AG04449 (cell line): ENCODE measurements at regions of chr14 and their contacts with region 1.

Region 1: GRCh38 chr14:75906676-75907280 is 75.0 kb downstream of the TGFB3 start:
- DNase-seq: no peak
- H3K4me3 ChIP-seq: no peak overlapping the region
- CTCF ChIP-seq: peak; percentile 68

Region 2: DNA sequence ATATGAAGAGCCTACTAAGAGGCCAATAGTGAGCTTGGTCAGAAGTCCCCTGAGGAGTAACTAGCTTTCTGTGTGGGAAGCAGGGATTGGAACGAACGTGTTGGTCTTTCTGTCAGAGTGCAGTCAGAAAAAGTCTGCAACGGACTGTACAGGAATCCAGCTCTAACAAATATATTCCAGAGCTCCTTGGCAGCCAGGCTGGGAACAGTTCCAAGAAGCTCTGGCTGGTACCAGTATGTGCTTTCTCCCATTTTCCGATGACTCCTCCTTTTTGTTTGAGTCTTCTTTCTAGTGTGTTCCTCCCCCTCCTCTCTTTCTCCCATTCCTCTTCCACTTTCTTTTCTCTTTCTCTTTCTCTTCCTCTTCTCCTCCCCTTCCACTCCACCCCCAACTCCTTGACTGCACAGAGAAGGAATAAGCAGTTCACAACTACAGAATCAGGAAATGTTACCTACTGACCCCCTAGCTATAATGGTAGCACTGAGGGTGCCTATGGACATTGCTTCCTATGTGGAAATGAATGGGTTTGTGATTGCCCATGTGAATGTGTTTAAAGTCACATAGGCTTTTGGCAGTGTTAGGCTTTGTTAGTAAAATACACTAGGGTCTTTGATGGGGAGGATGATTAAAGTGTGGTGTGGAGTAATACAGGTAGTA is 185.8 kb before region 1 on chr14:
- CTCF ChIA-PET with region 1: interaction called, 16 read pairs
- POLR2A ChIA-PET with region 1: no interaction called
- DNase-seq: no peak
- H3K4me3 ChIP-seq: no peak overlapping the region
- CTCF ChIP-seq: no peak

Region 3: GRCh38 chr14:75822522-75823141 is 84.1 kb before region 1 on chr14:
- CTCF ChIA-PET with region 1: interaction called, 17 read pairs
- POLR2A ChIA-PET with region 1: no interaction called
- DNase-seq: no peak
- H3K4me3 ChIP-seq: no peak overlapping the region
- CTCF ChIP-seq: no peak

Region 4: GRCh38 chr14:75884198-75884611 is 22.6 kb before region 1 on chr14:
- CTCF ChIA-PET with region 1: interaction called, 163 read pairs
- POLR2A ChIA-PET with region 1: no interaction called
- DNase-seq: peak; percentile 78
- H3K4me3 ChIP-seq: no peak overlapping the region
- CTCF ChIP-seq: no peak

Region 5: GRCh38 chr14:75928690-75929181 is 22.0 kb after region 1 on chr14:
- CTCF ChIA-PET with region 1: interaction called, 45 read pairs
- POLR2A ChIA-PET with region 1: no interaction called
- DNase-seq: no peak
- H3K4me3 ChIP-seq: no peak overlapping the region
- CTCF ChIP-seq: no peak

Region 6: DNA sequence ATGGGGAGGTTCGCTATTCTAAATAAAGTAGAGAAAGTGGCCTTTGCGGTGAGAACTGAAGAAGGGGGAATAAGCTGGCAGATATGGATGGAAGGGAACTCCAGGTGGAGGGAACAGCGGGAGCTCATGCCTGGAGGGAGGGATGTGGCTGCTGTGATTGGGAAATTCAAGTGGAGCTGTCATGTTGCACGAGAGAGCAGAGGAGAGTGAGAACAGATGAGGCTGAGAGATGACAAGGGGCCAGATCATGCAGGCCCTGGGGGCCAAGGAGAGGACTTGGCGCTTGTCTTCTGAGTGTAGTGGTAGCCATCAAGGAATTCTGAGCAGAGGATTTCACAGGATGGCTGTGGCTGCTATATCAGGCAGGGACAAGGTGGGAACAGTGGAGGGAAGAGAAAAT is 40.0 kb after region 1 on chr14:
- CTCF ChIA-PET with region 1: interaction called, 32 read pairs
- POLR2A ChIA-PET with region 1: no interaction called
- DNase-seq: no peak
- H3K4me3 ChIP-seq: no peak overlapping the region
- CTCF ChIP-seq: no peak

Region 7: DNA sequence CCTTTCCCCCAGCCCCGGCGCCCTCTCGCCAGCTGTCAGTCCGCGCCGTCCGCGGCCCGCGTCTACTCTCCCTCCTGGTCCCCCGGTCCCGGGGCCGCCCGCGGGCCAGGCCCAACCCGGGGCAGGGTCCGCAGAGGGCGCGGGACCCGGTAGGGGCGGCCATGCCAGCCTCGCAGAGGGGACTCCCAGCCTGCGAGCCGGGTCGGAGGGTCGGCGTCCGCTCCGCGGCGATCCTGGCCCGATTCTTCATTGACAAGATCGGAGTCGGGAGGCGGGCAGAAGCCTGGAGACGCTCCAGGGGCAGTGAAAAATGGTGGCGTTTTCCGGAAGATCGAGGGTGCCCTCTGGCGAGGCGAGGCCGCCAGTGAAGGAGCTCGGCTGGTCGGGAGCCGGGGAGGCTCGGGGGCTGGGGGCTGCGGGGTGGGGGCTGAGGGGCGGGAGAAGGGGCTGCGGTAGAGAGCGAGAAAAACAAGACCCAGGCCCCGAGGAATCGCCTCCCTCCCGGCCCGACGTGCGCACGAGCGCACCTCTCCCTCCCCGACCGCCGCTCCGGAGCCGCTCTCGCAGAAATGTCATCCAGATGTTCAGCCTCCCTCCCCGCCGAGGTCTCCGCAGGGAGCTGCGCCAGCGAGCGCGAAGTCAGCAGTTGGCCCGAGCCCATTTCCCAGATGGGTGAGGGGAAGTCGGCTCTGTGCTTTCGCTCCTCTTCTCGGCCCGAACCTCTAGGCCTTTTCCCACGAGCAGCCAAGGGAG is 75.7 kb after region 1 on chr14:
- CTCF ChIA-PET with region 1: interaction called, 230 read pairs
- POLR2A ChIA-PET with region 1: no interaction called
- DNase-seq: no peak
- H3K4me3 ChIP-seq: peak overlapping the region; percentile 66
- CTCF ChIP-seq: peak; percentile 84